ENCODE measurements at regions of chr7 and their contacts with region 1.

Region 1: GRCh38 chr7:120877701-120878100 is 19.8 kb upstream of the TSPAN12 start:
- DNase-seq: no peak
- ATAC-seq: no peak
- H3K4me3 ChIP-seq: no peak overlapping the region
- H3K4me3 Mint-ChIP-seq: no peak overlapping the region
- H3K27ac ChIP-seq: no peak overlapping the region
- H3K27ac Mint-ChIP-seq: no peak overlapping the region
- H3K4me1 ChIP-seq: no peaks in the 10 kb centered on the region
- H3K4me1 Mint-ChIP-seq: no peaks in the 10 kb centered on the region
- H3K27me3 ChIP-seq: peaks cover 0 to 2% of the 10 kb centered on the region in 2 experiments
- H3K27me3 Mint-ChIP-seq: peaks cover 15 to 31% of the 10 kb centered on the region in 2 donors

Region 2: DNA sequence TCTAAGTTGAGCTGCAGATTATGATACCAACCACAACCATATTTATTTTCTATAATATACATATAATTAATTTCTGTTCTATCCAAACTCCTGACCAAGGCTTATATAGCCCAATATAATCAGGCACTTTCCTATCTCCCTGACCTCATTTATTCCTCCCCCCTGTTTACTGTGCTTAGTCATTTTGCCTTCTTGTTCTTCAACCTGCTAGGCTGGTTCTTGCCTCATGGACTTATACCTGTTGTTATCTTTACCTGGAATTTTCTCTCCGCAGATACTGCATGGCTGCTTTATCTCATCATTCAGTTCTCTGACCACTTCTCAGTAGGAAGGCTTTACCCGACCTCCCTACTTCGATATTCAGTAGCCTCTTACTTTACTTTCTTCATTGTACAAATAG is 543.3 kb after region 1 on chr7:
- CTCF ChIA-PET with region 1: no interaction called
- POLR2A ChIA-PET with region 1: interaction called in 1 of 2 experiments, 10 read pairs
- DNase-seq: no peak
- ATAC-seq: no peak
- H3K4me3 ChIP-seq: no peak overlapping the region
- H3K4me3 Mint-ChIP-seq: no peak overlapping the region
- H3K27ac ChIP-seq: no peak overlapping the region
- H3K27ac Mint-ChIP-seq: no peak overlapping the region
- H3K4me1 ChIP-seq: no peaks in the 10 kb centered on the region
- H3K4me1 Mint-ChIP-seq: no peaks in the 10 kb centered on the region
- H3K27me3 ChIP-seq: no peaks in the 10 kb centered on the region
- H3K27me3 Mint-ChIP-seq: peaks cover 5 to 6% of the 10 kb centered on the region in 2 donors

Measured in T-cell (primary cell).